ENCODE measurements at regions of chr6 and their contacts with region 1.

Region 1: DNA sequence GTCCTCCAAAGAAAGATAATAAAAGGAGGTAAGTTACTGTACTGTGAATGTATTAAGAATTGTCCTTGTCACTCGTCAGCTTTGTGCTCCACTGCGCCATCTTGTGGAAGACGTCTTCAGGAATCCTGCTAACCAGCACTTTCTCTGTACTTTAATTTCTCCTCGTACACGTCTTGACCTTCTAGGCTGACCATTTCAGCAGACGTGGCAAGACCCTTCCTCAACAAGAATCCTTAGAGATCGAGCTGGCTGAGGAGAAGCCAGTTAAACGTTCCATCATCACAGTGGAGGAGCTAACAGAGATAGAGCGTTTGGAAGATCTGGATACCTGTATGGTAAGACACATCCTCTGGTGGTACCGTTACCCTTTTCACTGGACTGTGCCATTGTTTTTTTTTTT is 95.5 kb upstream of the SCGN start:
- DNase-seq: peak; percentile 79
- ATAC-seq: peak; percentile 81

Region 2: DNA sequence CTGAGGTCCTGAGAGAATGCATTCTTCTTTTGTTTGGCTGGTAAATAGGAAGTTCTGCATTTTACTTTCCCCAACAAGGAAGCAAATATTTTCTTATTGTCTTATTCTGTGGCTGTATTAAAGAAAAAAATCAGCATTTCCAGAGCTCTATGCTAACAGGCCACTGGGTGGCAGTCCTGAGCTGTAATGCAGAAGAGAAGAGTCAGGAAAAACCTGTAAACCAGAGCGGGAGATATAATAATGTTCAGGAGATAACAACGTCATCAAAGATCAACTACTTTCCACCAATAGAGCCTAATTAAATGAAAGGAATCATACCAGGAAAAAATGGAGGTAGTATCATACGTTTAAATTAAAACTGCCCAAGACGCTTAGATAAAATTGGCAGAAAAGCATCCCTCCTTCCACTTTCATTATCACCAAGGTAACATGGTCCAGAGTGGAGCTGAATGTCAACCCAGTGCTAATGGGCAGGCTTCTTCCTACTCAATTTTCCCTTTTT is 333.0 kb before region 1 on chr6:
- intact Hi-C with region 1: loop called (anchors 5 kb)
- DNase-seq: peak; percentile 69
- ATAC-seq: peak; percentile 75

Region 3: GRCh38 chr6:25266456-25267100 is 289.9 kb before region 1 on chr6:
- intact Hi-C with region 1: loop called (anchors 5 kb)
- DNase-seq: no peak
- ATAC-seq: peak; percentile 22

Measured in Right ventricle myocardium superior (tissue), 1 donor.